Activated CD4-positive, alpha-beta memory T cell treated with anti-CD3 and anti-CD28 coated beads, Interleukin-2, amount 10 ng/mL, durations not matched to agents 7 days and 5 days (primary cell): ENCODE measurements at regions of chr16 and their contacts with region 1.

Region 1: GRCh38 chr16:9148374-9149015 is 57.1 kb downstream of the HAPSTR1 start:
- DNase-seq: no peak
- H3K4me3 Mint-ChIP-seq: no peak overlapping the region
- H3K27ac Mint-ChIP-seq: no peak overlapping the region
- H3K4me1 Mint-ChIP-seq: no peaks in the 10 kb centered on the region
- H3K27me3 Mint-ChIP-seq: peaks cover 5% of the 10 kb centered on the region

Region 2: DNA sequence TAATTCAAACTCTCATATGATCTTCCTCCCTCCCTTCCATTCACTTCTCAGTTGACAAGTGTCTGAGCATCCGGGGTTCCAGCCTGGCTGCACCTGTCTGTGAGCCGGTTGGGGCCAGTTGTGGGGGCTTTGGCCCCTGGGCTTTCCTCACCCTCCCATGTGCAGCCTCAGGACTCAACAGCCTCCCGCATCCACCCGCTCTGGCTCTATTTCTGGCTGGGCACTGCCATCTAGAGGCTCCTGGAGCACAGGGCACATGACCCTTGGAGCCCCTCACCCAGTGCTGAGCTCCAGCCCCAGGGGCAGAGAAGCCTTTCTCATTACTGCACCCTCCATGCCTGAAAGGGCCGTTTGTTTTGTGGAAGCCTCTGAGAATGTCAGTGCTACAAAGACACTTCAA is 13.8 kb before region 1 on chr16:
- CTCF ChIA-PET with region 1: interaction called, 19 read pairs
- POLR2A ChIA-PET with region 1: no interaction called
- DNase-seq: peak; percentile 65
- H3K4me3 Mint-ChIP-seq: no peak overlapping the region
- H3K27ac Mint-ChIP-seq: no peak overlapping the region
- H3K4me1 Mint-ChIP-seq: peaks cover 33% of the 10 kb centered on the region
- H3K27me3 Mint-ChIP-seq: peaks cover 10% of the 10 kb centered on the region

Region 3: GRCh38 chr16:9192746-9193145 is 44.3 kb after region 1 on chr16:
- CTCF ChIA-PET with region 1: no interaction called
- POLR2A ChIA-PET with region 1: no interaction called
- DNase-seq: no peak
- H3K4me3 Mint-ChIP-seq: no peak overlapping the region
- H3K27ac Mint-ChIP-seq: no peak overlapping the region
- H3K4me1 Mint-ChIP-seq: no peaks in the 10 kb centered on the region
- H3K27me3 Mint-ChIP-seq: no peaks in the 10 kb centered on the region